Activated naive CD4-positive, alpha-beta T cell treated with anti-CD3 and anti-CD28 coated beads for 36 hours (primary cell): ENCODE measurements at regions of chr1 and their contacts with region 1.

Region 1: GRCh38 chr1:154183045-154183915 is 8.6 kb downstream of the TPM3 start:
- DNase-seq: peak; percentile 98
- H3K4me3 Mint-ChIP-seq: peak overlapping the region; percentile 100
- H3K27ac Mint-ChIP-seq: peak overlapping the region; percentile 99
- H3K4me1 Mint-ChIP-seq: peaks cover 38% of the 10 kb centered on the region
- H3K27me3 Mint-ChIP-seq: no peaks in the 10 kb centered on the region

Region 2: DNA sequence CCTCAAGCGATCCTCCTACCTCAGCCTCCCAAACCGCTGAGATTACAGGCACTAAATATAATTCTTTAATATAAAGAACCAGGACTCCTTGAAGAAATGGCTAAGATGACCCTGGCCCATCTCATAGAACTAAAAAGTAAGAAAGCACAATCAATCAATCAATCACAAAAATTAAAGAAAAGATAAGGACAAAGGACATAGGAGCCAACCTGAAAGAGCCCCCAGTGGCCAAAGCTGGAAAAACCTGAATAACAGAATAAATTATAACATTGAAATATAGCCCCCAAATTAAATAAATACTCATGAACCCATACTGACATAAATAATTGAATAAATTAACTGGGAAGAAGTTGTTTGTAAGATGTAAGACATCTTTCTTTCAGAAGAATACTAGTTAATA is 37.3 kb before region 1 on chr1:
- CTCF ChIA-PET with region 1: no interaction called
- intact Hi-C with region 1: loop called (anchors 5 kb)
- DNase-seq: no peak
- H3K4me3 Mint-ChIP-seq: no peak overlapping the region
- H3K27ac Mint-ChIP-seq: no peak overlapping the region
- H3K4me1 Mint-ChIP-seq: peaks cover 13% of the 10 kb centered on the region
- H3K27me3 Mint-ChIP-seq: no peaks in the 10 kb centered on the region

Region 3: GRCh38 chr1:154170547-154171222 is 12.6 kb before region 1 on chr1:
- CTCF ChIA-PET with region 1: no interaction called
- intact Hi-C with region 1: loop called (anchors 1 kb)
- DNase-seq: peak; percentile 85
- H3K4me3 Mint-ChIP-seq: peak overlapping the region; percentile 17
- H3K27ac Mint-ChIP-seq: peak overlapping the region; percentile 80
- H3K4me1 Mint-ChIP-seq: peaks cover 46% of the 10 kb centered on the region
- H3K27me3 Mint-ChIP-seq: no peaks in the 10 kb centered on the region

Region 4: GRCh38 chr1:154213274-154213673 is 30.0 kb after region 1 on chr1:
- CTCF ChIA-PET with region 1: no interaction called
- intact Hi-C with region 1: no loop called
- DNase-seq: no peak
- H3K4me3 Mint-ChIP-seq: no peak overlapping the region
- H3K27ac Mint-ChIP-seq: peak overlapping the region; percentile 88
- H3K4me1 Mint-ChIP-seq: peaks cover 63% of the 10 kb centered on the region
- H3K27me3 Mint-ChIP-seq: no peaks in the 10 kb centered on the region

Region 5: DNA sequence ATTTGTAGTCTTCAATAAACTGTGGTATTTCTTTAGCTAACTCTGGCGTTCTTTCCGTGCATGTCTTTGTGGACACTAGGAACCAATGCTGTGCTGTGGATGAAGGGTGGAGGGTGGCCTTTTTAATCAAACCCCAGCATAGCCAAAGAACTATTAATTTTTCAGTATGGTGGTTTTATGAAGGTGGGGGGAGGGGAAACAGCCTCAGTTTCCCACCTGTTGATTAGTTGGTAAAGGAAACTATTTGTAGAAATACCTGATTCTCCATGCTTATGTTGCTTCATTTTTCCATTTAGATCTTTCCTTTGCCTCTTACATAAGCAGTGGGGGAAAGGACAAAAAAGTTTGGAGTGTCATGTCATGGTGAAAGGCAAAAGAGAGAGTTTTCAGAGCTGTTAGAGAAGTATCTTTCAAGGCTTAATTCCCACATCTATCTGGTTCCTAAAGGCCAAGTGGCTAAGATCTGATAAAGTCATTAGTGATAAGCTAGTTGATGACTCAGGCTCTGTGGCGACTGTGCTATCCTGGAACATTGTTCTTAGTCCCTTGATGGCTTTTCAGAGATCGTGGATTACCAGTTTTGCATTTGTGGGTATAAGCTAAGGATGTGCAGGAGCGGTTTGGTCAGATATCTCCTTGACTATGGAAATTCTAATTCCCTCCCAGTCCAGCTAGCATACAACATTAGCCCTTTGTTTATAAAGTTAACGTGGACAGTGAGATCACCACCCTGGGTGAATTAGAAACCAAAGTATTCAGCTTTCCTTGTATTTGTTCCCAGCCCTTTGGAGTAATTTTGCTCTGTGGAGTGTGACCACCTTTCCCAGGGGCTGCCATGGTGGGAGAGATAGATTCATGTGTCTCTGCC is 80.4 kb after region 1 on chr1:
- CTCF ChIA-PET with region 1: no interaction called
- intact Hi-C with region 1: loop called (anchors 2 kb)
- DNase-seq: no peak
- H3K4me3 Mint-ChIP-seq: no peak overlapping the region
- H3K27ac Mint-ChIP-seq: peak overlapping the region; percentile 83
- H3K4me1 Mint-ChIP-seq: peaks cover 45% of the 10 kb centered on the region
- H3K27me3 Mint-ChIP-seq: no peaks in the 10 kb centered on the region

Region 6: GRCh38 chr1:154324669-154325582 is 141.6 kb after region 1 on chr1 and contains the start of gene ATP8B2:
- CTCF ChIA-PET with region 1: no interaction called
- intact Hi-C with region 1: loop called (anchors 1 kb)
- DNase-seq: peak; percentile 90
- H3K4me3 Mint-ChIP-seq: peak within 1 kb of the TSS; percentile 98
- H3K27ac Mint-ChIP-seq: peak within 1 kb of the TSS; percentile 94
- H3K4me1 Mint-ChIP-seq: peaks cover 37% of the 10 kb centered on the region
- H3K27me3 Mint-ChIP-seq: no peaks in the 10 kb centered on the region
- total RNA-seq, gene ATP8B2: 28.2 to 28.7 TPM

Region 7: GRCh38 chr1:154404984-154405761 is 221.9 kb after region 1 on chr1 and contains the start of gene IL6R:
- CTCF ChIA-PET with region 1: no interaction called
- intact Hi-C with region 1: loop called (anchors 2 kb)
- DNase-seq: peak; percentile 87
- H3K4me3 Mint-ChIP-seq: peak within 1 kb of the TSS; percentile 94
- H3K27ac Mint-ChIP-seq: peak within 1 kb of the TSS; percentile 96
- H3K4me1 Mint-ChIP-seq: peaks cover 77% of the 10 kb centered on the region
- H3K27me3 Mint-ChIP-seq: no peaks in the 10 kb centered on the region
- total RNA-seq, gene IL6R: 17.3 to 25.9 TPM

Region 8: DNA sequence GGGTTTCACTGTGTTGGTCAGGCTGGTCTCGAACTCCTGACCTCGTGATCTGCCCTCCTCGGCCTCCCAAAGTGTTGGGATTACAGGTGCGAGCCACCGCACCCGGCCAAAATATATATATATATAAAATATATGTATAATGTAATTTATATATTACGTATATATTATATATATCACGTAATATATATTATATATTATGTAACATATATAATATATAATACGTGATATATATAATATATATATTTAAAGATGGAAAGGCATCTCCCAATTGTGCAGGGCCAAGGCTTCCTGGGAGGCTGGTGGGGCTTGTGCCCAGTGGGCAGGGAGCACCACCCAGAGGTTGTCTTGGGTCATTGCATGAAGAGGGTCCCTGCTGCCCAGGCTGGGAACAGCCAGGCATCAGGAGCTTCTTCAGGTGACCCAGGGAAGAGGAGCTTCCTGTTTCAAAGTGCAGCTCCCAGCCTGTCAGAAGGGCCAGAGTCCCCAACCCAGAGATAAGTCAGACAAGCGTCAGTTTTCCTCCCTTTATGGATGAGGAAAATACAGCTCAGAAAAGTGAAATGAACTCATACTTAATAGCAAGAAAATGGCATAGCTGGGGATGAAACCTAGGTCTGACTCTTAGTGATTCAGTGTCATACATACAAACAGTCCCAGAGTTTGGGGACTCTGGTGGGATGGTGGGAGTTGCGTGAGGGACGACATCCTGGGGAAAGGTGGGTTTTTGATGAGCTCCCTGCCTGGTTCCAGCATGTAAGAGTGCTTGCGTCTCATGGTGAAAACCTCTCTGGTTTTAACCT is 363.2 kb after region 1 on chr1:
- CTCF ChIA-PET with region 1: no interaction called
- intact Hi-C with region 1: loop called (anchors 5 kb)
- DNase-seq: peak; percentile 77
- H3K4me3 Mint-ChIP-seq: no peak overlapping the region
- H3K27ac Mint-ChIP-seq: no peak overlapping the region
- H3K4me1 Mint-ChIP-seq: peaks cover 21% of the 10 kb centered on the region
- H3K27me3 Mint-ChIP-seq: no peaks in the 10 kb centered on the region